Naive thymus-derived CD4-positive, alpha-beta T cell (primary cell): ENCODE measurements at regions of chrX and their contacts with region 1.

Region 1: DNA sequence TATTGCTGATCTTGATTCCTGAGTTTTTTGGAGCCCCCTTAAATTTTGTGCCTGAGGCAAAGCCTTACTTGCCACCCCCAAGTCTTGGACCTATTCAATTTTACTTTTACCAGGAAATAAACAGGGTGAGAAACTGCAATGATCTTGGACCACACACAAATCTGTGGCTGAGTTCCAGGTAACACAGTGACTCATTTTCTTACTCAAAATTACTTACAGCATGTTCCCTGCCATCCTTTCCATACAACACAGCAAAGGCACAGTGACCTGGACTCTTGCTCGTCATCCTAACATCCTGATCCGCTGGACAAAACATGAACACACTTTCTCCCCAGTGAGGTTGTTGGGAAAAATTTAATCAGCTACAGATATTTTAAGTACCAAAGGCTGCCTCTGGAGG is 60.7 kb upstream of the S100G start:
- DNase-seq: no peak
- ATAC-seq: no peak
- H3K4me3 ChIP-seq: no peak overlapping the region
- H3K4me3 Mint-ChIP-seq: no peak overlapping the region
- H3K27ac ChIP-seq: no peak overlapping the region
- H3K27ac Mint-ChIP-seq: no peak overlapping the region
- H3K4me1 ChIP-seq: peaks cover 0 to 8% of the 10 kb centered on the region in 2 donors
- H3K4me1 Mint-ChIP-seq: peaks cover 0 to 22% (median 18%) of the 10 kb centered on the region in 7 donors
- H3K27me3 ChIP-seq: no peaks in the 10 kb centered on the region
- H3K27me3 Mint-ChIP-seq: no peaks in the 10 kb centered on the region

Region 2: GRCh38 chrX:16603822-16604221 is 14.6 kb after region 1 on chrX:
- CTCF ChIA-PET with region 1: no interaction called
- POLR2A ChIA-PET with region 1: interaction called, 4 read pairs
- intact Hi-C with region 1: loop called in 1 of 2 experiments (anchors 2 kb)
- DNase-seq: peak in 5 of 9 donors; percentile 4 to 33 (median 21)
- ATAC-seq: no peak
- H3K4me3 ChIP-seq: no peak overlapping the region
- H3K4me3 Mint-ChIP-seq: peak overlapping the region; percentile 23 to 86 (median 76)
- H3K27ac ChIP-seq: peak overlapping the region; percentile 58
- H3K27ac Mint-ChIP-seq: peak overlapping the region; percentile 79 to 96 (median 93)
- H3K4me1 ChIP-seq: peaks cover 0 to 32% of the 10 kb centered on the region in 2 donors
- H3K4me1 Mint-ChIP-seq: peaks cover 4 to 54% (median 39%) of the 10 kb centered on the region in 7 donors
- H3K27me3 ChIP-seq: no peaks in the 10 kb centered on the region
- H3K27me3 Mint-ChIP-seq: no peaks in the 10 kb centered on the region

Region 3: DNA sequence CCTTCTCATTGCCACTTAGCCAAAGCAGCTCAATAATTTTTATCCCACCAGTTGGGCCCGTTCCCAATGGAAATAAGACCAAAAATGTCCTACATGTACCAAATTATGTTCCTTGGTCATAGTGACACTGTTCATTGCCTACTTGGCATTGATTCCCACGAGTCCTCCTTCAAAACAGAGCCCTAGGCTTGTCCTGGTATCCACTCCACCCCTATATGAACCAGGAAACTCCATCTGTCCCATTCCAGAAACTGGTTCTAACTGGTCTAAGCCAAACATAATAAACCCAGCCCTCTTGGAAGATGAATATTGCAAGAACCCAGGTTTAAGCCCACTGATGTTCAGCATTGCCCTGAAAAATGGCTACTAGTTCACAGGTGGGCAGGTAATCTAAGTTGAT is 29.8 kb after region 1 on chrX:
- CTCF ChIA-PET with region 1: no interaction called
- POLR2A ChIA-PET with region 1: no interaction called
- intact Hi-C with region 1: no loop called
- DNase-seq: no peak
- ATAC-seq: no peak
- H3K4me3 ChIP-seq: no peak overlapping the region
- H3K4me3 Mint-ChIP-seq: no peak overlapping the region
- H3K27ac ChIP-seq: no peak overlapping the region
- H3K27ac Mint-ChIP-seq: no peak overlapping the region
- H3K4me1 ChIP-seq: no peaks in the 10 kb centered on the region
- H3K4me1 Mint-ChIP-seq: peaks cover 0 to 5% (median 3%) of the 10 kb centered on the region in 7 donors
- H3K27me3 ChIP-seq: no peaks in the 10 kb centered on the region
- H3K27me3 Mint-ChIP-seq: no peaks in the 10 kb centered on the region

Region 4: DNA sequence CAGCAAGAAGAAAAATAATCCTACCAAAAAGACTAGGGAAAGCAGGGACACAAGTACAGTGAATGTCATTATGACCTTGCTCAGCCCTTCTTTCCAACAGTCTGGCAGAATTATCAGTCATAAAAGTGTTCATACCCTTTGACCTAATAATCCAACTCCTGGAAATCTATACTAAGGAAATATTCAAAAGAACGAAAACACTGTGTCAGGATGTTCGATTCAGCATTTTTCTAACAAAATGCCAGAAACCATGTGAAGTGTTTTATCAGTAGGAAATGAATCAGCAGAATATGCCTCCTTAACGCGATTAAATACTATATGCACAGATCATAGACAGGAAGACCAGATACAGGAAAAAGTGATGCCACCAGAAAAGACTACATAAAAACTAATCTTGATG is 44.5 kb after region 1 on chrX:
- CTCF ChIA-PET with region 1: no interaction called
- POLR2A ChIA-PET with region 1: no interaction called
- intact Hi-C with region 1: loop called in 1 of 2 experiments (anchors 10 kb)
- DNase-seq: no peak
- ATAC-seq: no peak
- H3K4me3 ChIP-seq: no peak overlapping the region
- H3K4me3 Mint-ChIP-seq: no peak overlapping the region
- H3K27ac ChIP-seq: no peak overlapping the region
- H3K27ac Mint-ChIP-seq: peak overlapping the region in 1 of 9 donors; percentile 9
- H3K4me1 ChIP-seq: no peaks in the 10 kb centered on the region
- H3K4me1 Mint-ChIP-seq: peaks cover 0 to 8% (median 5%) of the 10 kb centered on the region in 7 donors
- H3K27me3 ChIP-seq: no peaks in the 10 kb centered on the region
- H3K27me3 Mint-ChIP-seq: no peaks in the 10 kb centered on the region